ENCODE measurements at regions of chr3 and their contacts with region 1.

Region 1: GRCh38 chr3:52278510-52279069 is at the start of gene WDR82:
- DNase-seq: peak; percentile 92 to 100 (median 96)
- ATAC-seq: peak; percentile 93
- H3K4me3 ChIP-seq: peak within 1 kb of the TSS; percentile 92
- H3K4me3 Mint-ChIP-seq: peak within 1 kb of the TSS; percentile 91 to 99 (median 98)
- H3K27ac ChIP-seq: peak within 1 kb of the TSS; percentile 96
- H3K27ac Mint-ChIP-seq: peak within 1 kb of the TSS; percentile 93 to 99 (median 99)
- H3K4me1 ChIP-seq: peaks cover 41 to 44% of the 10 kb centered on the region in 2 donors
- H3K4me1 Mint-ChIP-seq: peaks cover 37 to 74% (median 71%) of the 10 kb centered on the region in 7 donors
- H3K27me3 ChIP-seq: no peaks in the 10 kb centered on the region
- H3K27me3 Mint-ChIP-seq: no peaks in the 10 kb centered on the region
- total RNA-seq, gene WDR82: 112 to 161 (median 135) TPM

Region 2: DNA sequence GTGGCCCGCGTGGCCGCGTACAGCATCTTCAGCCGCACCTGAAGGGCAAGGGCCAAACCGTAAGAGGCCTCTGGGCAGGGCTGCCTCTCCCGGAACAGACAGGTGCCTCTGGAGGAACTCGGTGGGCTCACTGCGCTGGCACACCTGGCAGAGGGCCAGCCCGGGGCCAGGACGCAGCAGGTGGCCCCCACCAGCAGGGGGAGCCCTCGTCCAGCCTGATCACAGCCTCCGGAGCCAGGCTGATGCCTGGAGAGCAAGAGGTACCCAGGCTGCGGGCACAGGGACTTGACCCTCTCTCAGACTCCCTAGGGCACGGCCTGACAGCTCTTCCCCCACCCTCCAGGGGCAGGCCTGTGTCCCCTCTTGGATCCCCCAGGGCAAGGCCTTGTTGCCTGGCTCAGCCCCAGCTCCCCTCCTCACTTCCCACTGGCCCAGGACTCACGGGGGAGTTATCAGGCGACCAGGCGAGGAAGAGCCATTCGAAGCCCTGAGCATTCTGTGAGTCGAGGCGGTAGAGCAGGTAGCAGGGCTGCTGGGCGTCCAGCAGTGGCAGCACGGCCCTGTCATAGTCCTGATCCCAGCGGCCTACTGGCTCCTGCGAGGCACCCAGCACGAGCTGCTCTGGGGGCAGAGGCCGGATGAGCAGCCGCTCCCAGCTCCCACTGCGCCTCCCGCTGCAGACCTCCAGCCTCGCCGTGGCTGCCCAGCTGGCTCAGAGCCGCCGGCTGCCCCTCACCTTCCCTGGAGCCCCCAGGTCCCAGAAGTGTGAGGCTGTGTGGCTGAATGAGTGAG is 46.9 kb before region 1 on chr3:
- CTCF ChIA-PET with region 1: interaction called, 126 read pairs
- POLR2A ChIA-PET with region 1: interaction called, 1,418 read pairs
- intact Hi-C with region 1: no loop called
- DNase-seq: peak; percentile 77 to 96 (median 88)
- ATAC-seq: peak; percentile 91
- H3K4me3 ChIP-seq: no peak overlapping the region
- H3K4me3 Mint-ChIP-seq: peak overlapping the region; percentile 20 to 69 (median 53)
- H3K27ac ChIP-seq: peak overlapping the region; percentile 42
- H3K27ac Mint-ChIP-seq: peak overlapping the region; percentile 32 to 88 (median 80)
- H3K4me1 ChIP-seq: peaks cover 22 to 35% of the 10 kb centered on the region in 2 donors
- H3K4me1 Mint-ChIP-seq: peaks cover 40 to 63% (median 58%) of the 10 kb centered on the region in 7 donors
- H3K27me3 ChIP-seq: no peaks in the 10 kb centered on the region
- H3K27me3 Mint-ChIP-seq: no peaks in the 10 kb centered on the region

Region 3: DNA sequence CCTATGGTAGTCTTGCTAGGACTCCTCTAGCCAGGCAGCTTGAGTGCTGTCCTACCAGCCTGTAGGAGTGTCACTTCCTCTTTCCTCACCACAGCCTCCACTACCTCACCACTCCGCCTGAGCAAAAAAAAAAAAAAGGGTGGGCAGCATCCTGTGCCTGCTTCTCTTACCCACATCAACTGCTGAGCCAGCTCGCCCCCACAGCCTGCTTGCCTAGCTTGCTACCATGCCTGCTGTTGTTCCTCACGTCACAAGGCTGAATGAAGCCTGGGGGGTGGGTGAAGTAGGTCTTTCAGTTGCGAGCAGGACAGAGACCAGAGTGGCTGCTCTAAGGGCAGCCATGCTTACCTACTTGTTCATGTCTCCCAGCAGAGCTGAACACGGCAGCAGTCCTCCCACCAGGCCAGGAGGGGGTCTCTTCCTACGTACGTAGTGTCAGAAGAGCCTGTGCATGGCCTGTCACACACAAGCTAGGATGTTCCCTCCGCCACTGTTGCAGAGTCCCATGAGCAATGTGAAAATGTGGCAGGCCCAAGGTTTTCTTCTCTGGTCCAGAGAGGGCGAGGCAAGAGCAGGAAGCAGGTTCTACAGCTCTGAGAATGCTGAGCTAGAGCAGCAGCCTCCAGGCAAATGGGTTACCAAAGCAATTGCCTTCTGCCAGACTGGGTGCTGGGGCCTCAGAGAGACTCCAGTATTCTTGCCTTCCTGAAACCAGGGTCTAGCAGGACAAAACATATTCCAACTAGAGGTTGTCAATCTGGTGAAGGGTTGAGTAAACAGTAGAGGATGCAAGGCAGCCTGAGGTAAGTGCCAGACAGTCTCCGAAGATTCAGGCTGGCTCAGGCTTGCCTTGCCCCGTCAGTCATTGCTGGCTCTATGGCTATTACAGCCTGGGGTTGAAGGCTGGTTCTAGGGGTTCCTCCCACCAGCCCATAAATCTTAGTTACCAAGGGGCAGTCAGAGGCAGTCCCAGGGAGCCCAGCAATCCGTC is 25.0 kb before region 1 on chr3:
- CTCF ChIA-PET with region 1: interaction called, 33 read pairs
- POLR2A ChIA-PET with region 1: interaction called, 1,418 read pairs
- intact Hi-C with region 1: loop called (anchors 1 kb)
- DNase-seq: peak in 8 of 9 donors; percentile 81 to 95 (median 94)
- ATAC-seq: peak; percentile 95
- H3K4me3 ChIP-seq: peak overlapping the region; percentile 38
- H3K4me3 Mint-ChIP-seq: peak overlapping the region; percentile 82 to 97 (median 86)
- H3K27ac ChIP-seq: peak overlapping the region; percentile 87
- H3K27ac Mint-ChIP-seq: peak overlapping the region; percentile 92 to 100 (median 98)
- H3K4me1 ChIP-seq: peaks cover 55 to 91% of the 10 kb centered on the region in 2 donors
- H3K4me1 Mint-ChIP-seq: peaks cover 46 to 99% (median 92%) of the 10 kb centered on the region in 7 donors
- H3K27me3 ChIP-seq: no peaks in the 10 kb centered on the region
- H3K27me3 Mint-ChIP-seq: peaks cover 0 to 4% (median 0%) of the 10 kb centered on the region in 5 donors

Region 4: DNA sequence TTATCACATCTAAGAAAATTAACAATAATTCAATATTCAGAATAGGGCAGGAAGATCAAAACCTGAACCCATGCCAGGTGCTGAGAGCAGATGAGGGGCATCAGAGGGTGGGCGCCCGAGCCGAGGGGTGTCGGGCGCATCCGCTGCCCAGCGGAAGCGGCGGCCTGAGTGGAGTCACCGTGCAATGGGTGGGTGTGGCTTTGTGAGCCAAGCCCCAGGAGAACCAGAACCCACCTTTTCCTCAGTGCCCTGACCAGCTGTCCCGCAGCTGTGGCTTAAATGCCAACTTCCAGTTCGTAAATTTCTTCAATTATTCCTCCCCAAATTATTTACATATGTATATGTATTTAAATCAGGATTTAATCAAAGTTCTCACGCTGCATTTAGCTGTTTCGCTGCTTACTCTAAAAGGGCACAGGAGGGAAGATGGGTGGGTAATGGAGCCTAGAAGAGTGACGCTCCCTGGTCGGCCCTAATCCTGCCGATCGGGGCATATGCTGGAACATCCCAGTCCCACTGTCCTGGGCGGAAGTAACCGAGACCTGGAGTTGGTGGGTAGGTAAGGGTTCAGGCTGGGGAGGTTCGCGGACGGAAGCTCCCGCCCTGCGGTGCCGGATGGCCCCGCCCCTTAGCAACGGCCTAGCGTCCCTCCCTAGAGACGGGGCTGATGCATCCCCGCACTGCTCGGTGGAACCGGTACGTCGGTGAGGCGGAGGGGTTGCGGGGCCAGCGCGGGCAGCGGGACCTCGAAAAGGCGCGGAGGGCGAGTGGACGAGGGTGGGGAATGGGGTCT is 38.8 kb after region 1 on chr3:
- CTCF ChIA-PET with region 1: no interaction called
- POLR2A ChIA-PET with region 1: interaction called, 6 read pairs
- intact Hi-C with region 1: loop called in 1 of 2 experiments (anchors 5 kb)
- DNase-seq: peak; percentile 61 to 78 (median 74)
- ATAC-seq: peak; percentile 92
- H3K4me3 ChIP-seq: peak overlapping the region; percentile 46
- H3K4me3 Mint-ChIP-seq: peak overlapping the region; percentile 68 to 84 (median 76)
- H3K27ac ChIP-seq: peak overlapping the region; percentile 17
- H3K27ac Mint-ChIP-seq: peak overlapping the region in 8 of 9 donors; percentile 38 to 80 (median 66)
- H3K4me1 ChIP-seq: peaks cover 9 to 11% of the 10 kb centered on the region in 2 donors
- H3K4me1 Mint-ChIP-seq: peaks cover 0 to 22% (median 17%) of the 10 kb centered on the region in 7 donors
- H3K27me3 ChIP-seq: no peaks in the 10 kb centered on the region
- H3K27me3 Mint-ChIP-seq: no peaks in the 10 kb centered on the region

Region 5: GRCh38 chr3:52403955-52404790 is 125.6 kb after region 1 on chr3:
- CTCF ChIA-PET with region 1: no interaction called
- POLR2A ChIA-PET with region 1: no interaction called
- intact Hi-C with region 1: no loop called
- DNase-seq: no peak
- ATAC-seq: no peak
- H3K4me3 ChIP-seq: no peak overlapping the region
- H3K4me3 Mint-ChIP-seq: no peak overlapping the region
- H3K27ac ChIP-seq: no peak overlapping the region
- H3K27ac Mint-ChIP-seq: peak overlapping the region in 1 of 9 donors; percentile 67
- H3K4me1 ChIP-seq: peaks cover 11 to 12% of the 10 kb centered on the region in 2 donors
- H3K4me1 Mint-ChIP-seq: peaks cover 13 to 20% (median 19%) of the 10 kb centered on the region in 7 donors
- H3K27me3 ChIP-seq: no peaks in the 10 kb centered on the region
- H3K27me3 Mint-ChIP-seq: no peaks in the 10 kb centered on the region

Region 6: DNA sequence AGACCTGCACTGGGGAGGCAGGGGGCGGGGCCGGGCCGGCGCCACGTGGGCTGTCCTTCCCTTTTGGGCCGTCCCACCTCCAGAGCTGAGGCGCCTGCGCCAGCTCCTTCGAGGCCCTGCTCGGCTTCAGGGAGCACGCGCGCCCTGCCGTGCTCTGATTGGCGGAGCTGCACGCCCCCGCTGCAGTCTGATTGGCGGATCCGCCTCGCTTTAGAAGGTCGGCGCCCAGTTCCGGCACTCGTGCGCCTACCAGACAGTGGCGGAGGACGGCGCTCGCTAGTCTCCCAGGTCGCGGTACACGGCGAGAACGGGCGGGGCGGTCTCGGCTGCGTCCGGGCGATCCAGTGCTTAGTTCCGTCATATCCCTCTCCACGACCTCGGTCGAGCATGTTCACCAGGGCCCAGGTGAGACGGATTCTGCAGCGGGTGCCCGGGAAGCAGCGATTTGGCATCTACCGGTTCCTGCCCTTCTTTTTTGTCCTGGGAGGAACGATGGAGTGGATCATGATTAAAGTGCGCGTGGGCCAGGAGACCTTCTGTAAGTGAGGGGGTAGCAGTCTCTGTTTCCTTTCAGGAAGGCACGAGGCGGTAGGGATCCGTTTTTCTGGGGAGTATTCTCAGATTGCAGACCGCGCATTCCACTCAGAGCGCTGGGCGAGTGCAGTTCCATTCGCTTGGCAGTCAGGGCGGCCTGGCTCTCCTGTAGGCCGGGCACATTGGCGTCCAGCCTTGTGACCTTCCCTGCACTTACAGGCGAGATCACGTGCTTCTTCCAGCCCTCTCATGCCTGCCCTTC is 258.0 kb after region 1 on chr3 and contains the start of gene UQCC5:
- CTCF ChIA-PET with region 1: no interaction called
- POLR2A ChIA-PET with region 1: interaction called, 3 read pairs
- intact Hi-C with region 1: loop called in 1 of 2 experiments (anchors 10 kb)
- DNase-seq: peak; percentile 89 to 98 (median 97)
- ATAC-seq: peak; percentile 95
- H3K4me3 ChIP-seq: peak within 1 kb of the TSS; percentile 67
- H3K4me3 Mint-ChIP-seq: peak within 1 kb of the TSS; percentile 96 to 100 (median 99)
- H3K27ac ChIP-seq: peak within 1 kb of the TSS; percentile 85
- H3K27ac Mint-ChIP-seq: peak within 1 kb of the TSS; percentile 96 to 99 (median 98)
- H3K4me1 ChIP-seq: peaks cover 24 to 30% of the 10 kb centered on the region in 2 donors
- H3K4me1 Mint-ChIP-seq: peaks cover 29 to 66% (median 50%) of the 10 kb centered on the region in 7 donors
- H3K27me3 ChIP-seq: no peaks in the 10 kb centered on the region
- H3K27me3 Mint-ChIP-seq: no peaks in the 10 kb centered on the region
- total RNA-seq, gene UQCC5: 5.4 to 11.9 (median 10.7) TPM